Psoas muscle (tissue), 8 donors: ENCODE measurements at regions of chrX and their contacts with region 1.

Region 1: GRCh38 chrX:40006106-40007017 is 91.4 kb downstream of the BCOR start:
- DNase-seq: peak; percentile 60 to 80
- ATAC-seq: peak; percentile 66 to 81 (median 77)
- H3K4me3 ChIP-seq: peak overlapping the region; percentile 28
- H3K27ac ChIP-seq: no peak overlapping the region
- H3K4me1 ChIP-seq: no peaks in the 10 kb centered on the region
- H3K27me3 ChIP-seq: peaks cover 0 to 82% (median 0%) of the 10 kb centered on the region in 3 donors
- CTCF ChIP-seq: no peak

Region 2: GRCh38 chrX:39527025-39527424 is 479.3 kb before region 1 on chrX:
- intact Hi-C with region 1: no loop called
- DNase-seq: no peak
- ATAC-seq: no peak
- H3K4me3 ChIP-seq: no peak overlapping the region
- H3K27ac ChIP-seq: no peak overlapping the region
- H3K4me1 ChIP-seq: no peaks in the 10 kb centered on the region
- H3K27me3 ChIP-seq: no peaks in the 10 kb centered on the region
- CTCF ChIP-seq: no peak

Region 3: GRCh38 chrX:39820938-39821708 is 185.2 kb before region 1 on chrX:
- intact Hi-C with region 1: loop called in 1 of 2 experiments (anchors 10 kb)
- DNase-seq: peak in 1 of 2 donors; percentile 57
- ATAC-seq: peak in 1 of 4 donors; percentile 50
- H3K4me3 ChIP-seq: peak overlapping the region; percentile 59
- H3K27ac ChIP-seq: no peak overlapping the region
- H3K4me1 ChIP-seq: no peaks in the 10 kb centered on the region
- H3K27me3 ChIP-seq: peaks cover 0 to 39% (median 0%) of the 10 kb centered on the region in 3 donors
- CTCF ChIP-seq: no peak

Region 4: GRCh38 chrX:39969099-39969818 is 37.1 kb before region 1 on chrX:
- intact Hi-C with region 1: no loop called
- DNase-seq: no peak
- ATAC-seq: no peak
- H3K4me3 ChIP-seq: no peak overlapping the region
- H3K27ac ChIP-seq: no peak overlapping the region
- H3K4me1 ChIP-seq: no peaks in the 10 kb centered on the region
- H3K27me3 ChIP-seq: no peaks in the 10 kb centered on the region
- CTCF ChIP-seq: no peak